ENCODE measurements at regions of chr7 and their contacts with region 1.

Region 1: GRCh38 chr7:31744294-31744874 is 57.4 kb downstream of the PPP1R17 start:
- DNase-seq: peak; percentile 64
- H3K4me3 ChIP-seq: no peak overlapping the region
- H3K27ac ChIP-seq: no peak overlapping the region
- H3K4me1 ChIP-seq: peaks cover 9% of the 10 kb centered on the region
- H3K27me3 ChIP-seq: no peaks in the 10 kb centered on the region
- CTCF ChIP-seq: peak; percentile 87 to 94

Region 2: GRCh38 chr7:31782411-31782991 is 38.1 kb after region 1 on chr7:
- CTCF ChIA-PET with region 1: interaction called, 4 read pairs
- dilution Hi-C with region 1: no loop called
- in situ Hi-C with region 1: no loop called
- intact Hi-C with region 1: loop called (anchors 1 kb)
- DNase-seq: peak; percentile 69
- H3K4me3 ChIP-seq: no peak overlapping the region
- H3K27ac ChIP-seq: no peak overlapping the region
- H3K4me1 ChIP-seq: no peaks in the 10 kb centered on the region
- H3K27me3 ChIP-seq: no peaks in the 10 kb centered on the region
- CTCF ChIP-seq: peak; percentile 82 to 83

Region 3: DNA sequence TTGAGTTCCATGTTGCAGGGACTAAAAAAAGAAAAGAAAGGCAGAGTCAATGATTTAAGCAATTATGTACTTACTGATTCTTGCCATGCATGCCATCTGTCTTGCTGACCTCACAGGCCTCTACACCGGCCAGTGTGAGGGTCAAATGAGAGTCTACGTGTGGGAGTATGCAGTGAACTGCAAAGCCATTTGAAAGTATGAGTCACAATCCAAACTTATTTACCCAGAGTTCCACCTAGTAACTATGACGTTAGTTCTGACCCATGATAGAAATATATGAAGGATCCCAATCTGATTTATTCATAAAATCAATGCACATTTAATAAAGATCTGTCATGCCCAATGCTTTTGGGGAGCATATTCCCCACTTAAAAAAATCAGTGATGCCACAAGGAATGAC is 299.3 kb after region 1 on chr7:
- CTCF ChIA-PET with region 1: no interaction called
- dilution Hi-C with region 1: no loop called
- in situ Hi-C with region 1: no loop called
- intact Hi-C with region 1: loop called (anchors 1 kb)
- DNase-seq: no peak
- H3K4me3 ChIP-seq: no peak overlapping the region
- H3K27ac ChIP-seq: no peak overlapping the region
- H3K4me1 ChIP-seq: no peaks in the 10 kb centered on the region
- H3K27me3 ChIP-seq: no peaks in the 10 kb centered on the region
- CTCF ChIP-seq: no peak

Region 4: DNA sequence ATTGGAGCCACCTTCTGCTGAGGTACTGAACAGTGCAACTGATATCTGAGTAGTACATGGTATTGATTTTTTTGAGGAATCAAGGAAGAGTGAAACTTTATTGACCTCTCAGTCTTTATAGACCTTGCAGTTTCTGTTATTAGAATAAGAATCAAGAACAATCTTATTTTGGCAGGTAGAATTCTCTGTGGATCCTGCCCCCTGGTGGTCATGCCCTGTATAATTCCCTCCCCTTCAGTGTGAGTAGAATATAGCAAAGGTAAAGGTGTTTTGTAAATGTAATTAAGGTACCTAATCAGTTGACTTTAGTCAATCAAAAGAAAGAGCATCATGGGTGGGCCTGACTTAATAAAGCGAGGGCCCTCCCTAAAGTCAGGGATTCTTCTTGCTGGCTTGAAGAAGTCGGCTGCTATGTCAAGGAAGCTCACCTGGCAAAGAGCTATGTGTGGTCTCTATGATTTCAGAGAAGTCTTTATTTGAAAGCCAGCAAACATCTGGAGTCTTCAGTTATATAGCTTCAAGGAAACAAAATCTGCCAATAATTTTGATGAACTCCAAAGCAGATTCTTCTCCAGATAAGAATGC is 603.0 kb after region 1 on chr7:
- CTCF ChIA-PET with region 1: no interaction called
- dilution Hi-C with region 1: no loop called
- in situ Hi-C with region 1: loop called (anchors 10 to 25 kb)
- intact Hi-C with region 1: loop called (anchors 5 kb)
- DNase-seq: no peak
- H3K4me3 ChIP-seq: no peak overlapping the region
- H3K27ac ChIP-seq: no peak overlapping the region
- H3K4me1 ChIP-seq: peaks cover 6% of the 10 kb centered on the region
- H3K27me3 ChIP-seq: no peaks in the 10 kb centered on the region
- CTCF ChIP-seq: peak; percentile 59 to 80

Region 5: GRCh38 chr7:32479574-32480200 is 735.3 kb after region 1 on chr7:
- CTCF ChIA-PET with region 1: no interaction called
- dilution Hi-C with region 1: no loop called
- in situ Hi-C with region 1: loop called in 1 of 2 experiments (anchors 25 kb)
- intact Hi-C with region 1: loop called (anchors 1 kb)
- DNase-seq: peak; percentile 29
- H3K4me3 ChIP-seq: no peak overlapping the region
- H3K27ac ChIP-seq: no peak overlapping the region
- H3K4me1 ChIP-seq: peaks cover 27% of the 10 kb centered on the region
- H3K27me3 ChIP-seq: no peaks in the 10 kb centered on the region
- CTCF ChIP-seq: peak; percentile 99